B cell (primary cell): ENCODE measurements at regions of chr12 and their contacts with region 1.

Region 1: GRCh38 chr12:105053116-105053572 is 31.1 kb downstream of the ALDH1L2 start:
- DNase-seq: peak; percentile 84
- ATAC-seq: peak; percentile 95
- H3K4me3 ChIP-seq: no peak overlapping the region
- H3K4me3 Mint-ChIP-seq: no peak overlapping the region
- H3K27ac ChIP-seq: no peak overlapping the region
- H3K27ac Mint-ChIP-seq: peak overlapping the region; percentile 4
- H3K4me1 ChIP-seq: peaks cover 0 to 11% of the 10 kb centered on the region in 2 donors
- H3K4me1 Mint-ChIP-seq: peaks cover 18% of the 10 kb centered on the region
- H3K27me3 ChIP-seq: no peaks in the 10 kb centered on the region
- H3K27me3 Mint-ChIP-seq: no peaks in the 10 kb centered on the region
- CTCF ChIP-seq: peak; percentile 96

Region 2: GRCh38 chr12:104201238-104202001 is 851.7 kb before region 1 on chr12:
- CTCF ChIA-PET with region 1: interaction called, 29 read pairs
- POLR2A ChIA-PET with region 1: no interaction called
- intact Hi-C with region 1: loop called (anchors 1 kb)
- DNase-seq: peak; percentile 79
- ATAC-seq: peak; percentile 73
- H3K4me3 ChIP-seq: no peak overlapping the region
- H3K4me3 Mint-ChIP-seq: no peak overlapping the region
- H3K27ac ChIP-seq: no peak overlapping the region
- H3K27ac Mint-ChIP-seq: no peak overlapping the region
- H3K4me1 ChIP-seq: no peaks in the 10 kb centered on the region
- H3K4me1 Mint-ChIP-seq: peaks cover 1% of the 10 kb centered on the region
- H3K27me3 ChIP-seq: peaks cover 0 to 4% (median 1%) of the 10 kb centered on the region in 4 experiments
- H3K27me3 Mint-ChIP-seq: peaks cover 19% of the 10 kb centered on the region
- CTCF ChIP-seq: peak; percentile 89

Region 3: DNA sequence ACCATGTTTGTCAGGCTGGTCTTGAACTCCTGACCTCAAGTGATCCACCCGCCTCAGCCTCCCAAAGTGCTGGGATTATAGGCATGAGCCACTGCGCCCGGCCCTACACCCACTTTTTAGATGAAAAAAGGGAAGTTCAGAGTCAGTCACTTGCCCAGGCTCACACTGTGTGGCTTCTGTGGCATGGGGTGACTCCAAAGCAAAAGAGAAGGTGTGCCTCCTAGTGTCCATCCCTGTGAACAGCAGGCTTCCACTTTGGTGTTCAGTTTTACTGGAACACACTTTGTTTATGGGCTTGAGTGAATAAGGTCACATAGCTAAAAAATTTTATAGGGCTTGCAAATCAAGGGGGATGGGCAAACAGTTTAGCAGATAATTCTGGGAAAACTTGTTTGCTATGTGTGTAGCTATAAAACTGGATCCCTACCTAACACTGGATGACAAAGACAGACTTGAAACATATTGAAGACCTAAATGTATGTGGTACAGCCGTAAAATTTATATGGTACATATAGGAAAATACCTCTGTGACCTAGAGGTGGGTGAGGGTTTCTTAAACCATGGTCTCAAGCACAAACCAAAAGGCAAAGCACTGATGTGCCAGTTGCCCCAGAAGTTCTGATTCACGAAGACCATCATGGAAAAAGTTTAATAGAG is 694.7 kb before region 1 on chr12:
- CTCF ChIA-PET with region 1: interaction called, 4 read pairs
- POLR2A ChIA-PET with region 1: no interaction called
- intact Hi-C with region 1: loop called (anchors 1 kb)
- DNase-seq: peak; percentile 82
- ATAC-seq: peak; percentile 97
- H3K4me3 ChIP-seq: no peak overlapping the region
- H3K4me3 Mint-ChIP-seq: no peak overlapping the region
- H3K27ac ChIP-seq: no peak overlapping the region
- H3K27ac Mint-ChIP-seq: no peak overlapping the region
- H3K4me1 ChIP-seq: no peaks in the 10 kb centered on the region
- H3K4me1 Mint-ChIP-seq: no peaks in the 10 kb centered on the region
- H3K27me3 ChIP-seq: no peaks in the 10 kb centered on the region
- H3K27me3 Mint-ChIP-seq: no peaks in the 10 kb centered on the region
- CTCF ChIP-seq: peak; percentile 76

Region 4: DNA sequence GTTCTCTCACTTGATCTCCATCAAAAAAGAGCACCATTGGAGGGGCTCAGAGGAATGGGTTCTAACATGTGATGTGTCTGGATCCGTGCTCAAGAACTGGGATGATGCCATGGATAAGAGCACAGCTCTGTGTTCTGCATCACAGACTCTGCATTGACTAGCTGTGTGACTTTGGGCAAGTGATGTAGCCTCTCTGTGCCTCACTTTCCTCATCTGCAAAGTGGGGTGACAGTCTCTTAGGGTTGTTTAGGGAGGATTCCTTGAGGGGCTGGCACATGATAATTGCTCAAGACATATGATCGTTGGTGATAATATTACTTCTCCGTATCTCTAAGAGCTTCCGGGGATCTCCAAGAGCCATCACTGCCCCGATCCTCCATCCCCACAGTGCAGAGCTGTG is 394.1 kb before region 1 on chr12:
- CTCF ChIA-PET with region 1: no interaction called
- POLR2A ChIA-PET with region 1: no interaction called
- intact Hi-C with region 1: no loop called
- DNase-seq: no peak
- ATAC-seq: no peak
- H3K4me3 ChIP-seq: no peak overlapping the region
- H3K4me3 Mint-ChIP-seq: no peak overlapping the region
- H3K27ac ChIP-seq: no peak overlapping the region
- H3K27ac Mint-ChIP-seq: no peak overlapping the region
- H3K4me1 ChIP-seq: no peaks in the 10 kb centered on the region
- H3K4me1 Mint-ChIP-seq: peaks cover 19% of the 10 kb centered on the region
- H3K27me3 ChIP-seq: no peaks in the 10 kb centered on the region
- H3K27me3 Mint-ChIP-seq: no peaks in the 10 kb centered on the region
- CTCF ChIP-seq: no peak

Region 5: DNA sequence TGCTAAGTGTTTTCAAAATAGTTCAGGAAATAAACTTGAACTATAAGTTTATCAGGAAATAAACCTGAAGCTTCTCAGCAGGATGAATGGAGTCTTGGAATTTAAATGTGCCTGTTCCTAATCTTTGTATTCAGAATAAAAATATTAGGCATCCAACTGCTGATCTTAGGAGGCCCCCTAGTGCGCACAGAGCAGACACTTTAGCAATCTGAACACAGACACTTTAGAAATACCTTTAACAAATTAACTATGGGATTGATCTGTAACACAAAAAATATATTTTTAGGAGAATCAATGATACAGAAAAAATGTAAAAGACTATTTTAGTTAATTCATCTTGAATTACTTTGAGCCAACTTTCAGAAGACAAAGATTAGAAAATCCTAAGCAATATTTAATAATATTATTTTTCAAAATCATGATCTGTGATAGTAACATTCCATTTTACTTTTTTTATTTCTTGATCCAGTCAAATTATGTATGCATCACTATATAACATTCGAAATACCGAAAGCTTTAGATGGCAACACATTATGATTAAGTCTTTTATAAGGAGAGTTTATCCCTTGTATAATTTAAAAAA is 175.9 kb before region 1 on chr12:
- CTCF ChIA-PET with region 1: no interaction called
- POLR2A ChIA-PET with region 1: no interaction called
- intact Hi-C with region 1: loop called (anchors 1 kb)
- DNase-seq: peak; percentile 56
- ATAC-seq: no peak
- H3K4me3 ChIP-seq: no peak overlapping the region
- H3K4me3 Mint-ChIP-seq: no peak overlapping the region
- H3K27ac ChIP-seq: no peak overlapping the region
- H3K27ac Mint-ChIP-seq: no peak overlapping the region
- H3K4me1 ChIP-seq: no peaks in the 10 kb centered on the region
- H3K4me1 Mint-ChIP-seq: no peaks in the 10 kb centered on the region
- H3K27me3 ChIP-seq: no peaks in the 10 kb centered on the region
- H3K27me3 Mint-ChIP-seq: no peaks in the 10 kb centered on the region
- CTCF ChIP-seq: peak; percentile 70

Region 6: DNA sequence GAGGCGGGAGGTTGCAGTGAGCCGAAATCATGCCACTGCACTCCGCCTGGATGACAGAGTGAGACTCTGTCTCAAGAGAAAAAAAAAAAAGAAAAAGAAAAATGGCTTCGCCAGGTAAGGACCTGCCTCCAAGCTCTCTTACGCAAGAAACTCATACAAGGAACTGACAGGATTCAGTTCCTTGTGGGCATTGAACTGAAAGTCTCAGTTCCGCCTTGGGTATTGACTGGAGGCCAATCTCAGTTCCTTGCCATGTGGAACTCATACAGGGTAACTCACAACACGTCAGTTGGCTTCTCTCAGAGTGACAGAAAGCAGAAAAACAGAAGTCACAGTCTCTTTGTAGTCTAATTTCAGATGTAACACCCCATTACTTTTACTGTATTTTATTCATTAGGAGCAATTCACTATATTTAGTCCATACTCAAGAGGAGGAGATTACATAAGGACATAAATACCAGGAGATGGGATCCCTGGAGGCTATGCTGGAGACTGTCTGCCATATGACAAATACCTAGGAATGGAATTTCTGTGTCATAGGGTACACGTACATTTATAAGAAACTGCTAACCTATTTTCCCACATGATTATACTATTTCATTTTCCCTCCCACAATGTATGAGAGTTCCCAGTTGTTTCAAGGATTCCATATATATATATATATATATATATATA is 78.4 kb before region 1 on chr12:
- CTCF ChIA-PET with region 1: interaction called, 3 read pairs
- POLR2A ChIA-PET with region 1: no interaction called
- intact Hi-C with region 1: loop called (anchors 5 kb)
- DNase-seq: peak; percentile 92
- ATAC-seq: peak; percentile 99
- H3K4me3 ChIP-seq: peak overlapping the region in 1 of 5 experiments; percentile 7
- H3K4me3 Mint-ChIP-seq: peak overlapping the region; percentile 69
- H3K27ac ChIP-seq: peak overlapping the region; percentile 71 to 76
- H3K27ac Mint-ChIP-seq: peak overlapping the region; percentile 76
- H3K4me1 ChIP-seq: peaks cover 24 to 32% of the 10 kb centered on the region in 2 donors
- H3K4me1 Mint-ChIP-seq: peaks cover 30% of the 10 kb centered on the region
- H3K27me3 ChIP-seq: no peaks in the 10 kb centered on the region
- H3K27me3 Mint-ChIP-seq: no peaks in the 10 kb centered on the region
- CTCF ChIP-seq: no peak